Sigmoid colon (tissue), 7 donors: ENCODE measurements at regions of chr22 and their contacts with region 1.

Region 1: GRCh38 chr22:47515384-47516122 is 753.1 kb downstream of the TBC1D22A start:
- DNase-seq: no peak
- H3K4me3 ChIP-seq: no peak overlapping the region
- H3K27ac ChIP-seq: no peak overlapping the region
- H3K4me1 ChIP-seq: no peaks in the 10 kb centered on the region
- H3K27me3 ChIP-seq: no peaks in the 10 kb centered on the region
- CTCF ChIP-seq: no peak
- EP300 ChIP-seq: no peak
- POLR2A ChIP-seq: no peak

Region 2: GRCh38 chr22:47460908-47461307 is 54.6 kb before region 1 on chr22:
- intact Hi-C with region 1: no loop called
- DNase-seq: no peak
- H3K4me3 ChIP-seq: no peak overlapping the region
- H3K27ac ChIP-seq: no peak overlapping the region
- H3K4me1 ChIP-seq: no peaks in the 10 kb centered on the region
- H3K27me3 ChIP-seq: no peaks in the 10 kb centered on the region
- CTCF ChIP-seq: no peak
- EP300 ChIP-seq: no peak
- POLR2A ChIP-seq: no peak

Region 3: GRCh38 chr22:47586020-47586419 is 70.5 kb after region 1 on chr22:
- intact Hi-C with region 1: loop called (anchors 10 kb)
- DNase-seq: peak; percentile 11
- H3K4me3 ChIP-seq: no peak overlapping the region
- H3K27ac ChIP-seq: no peak overlapping the region
- H3K4me1 ChIP-seq: no peaks in the 10 kb centered on the region
- H3K27me3 ChIP-seq: no peaks in the 10 kb centered on the region
- CTCF ChIP-seq: no peak
- EP300 ChIP-seq: no peak
- POLR2A ChIP-seq: no peak